Natural killer cell (primary cell): ENCODE measurements at regions of chr6 and their contacts with region 1.

Region 1: DNA sequence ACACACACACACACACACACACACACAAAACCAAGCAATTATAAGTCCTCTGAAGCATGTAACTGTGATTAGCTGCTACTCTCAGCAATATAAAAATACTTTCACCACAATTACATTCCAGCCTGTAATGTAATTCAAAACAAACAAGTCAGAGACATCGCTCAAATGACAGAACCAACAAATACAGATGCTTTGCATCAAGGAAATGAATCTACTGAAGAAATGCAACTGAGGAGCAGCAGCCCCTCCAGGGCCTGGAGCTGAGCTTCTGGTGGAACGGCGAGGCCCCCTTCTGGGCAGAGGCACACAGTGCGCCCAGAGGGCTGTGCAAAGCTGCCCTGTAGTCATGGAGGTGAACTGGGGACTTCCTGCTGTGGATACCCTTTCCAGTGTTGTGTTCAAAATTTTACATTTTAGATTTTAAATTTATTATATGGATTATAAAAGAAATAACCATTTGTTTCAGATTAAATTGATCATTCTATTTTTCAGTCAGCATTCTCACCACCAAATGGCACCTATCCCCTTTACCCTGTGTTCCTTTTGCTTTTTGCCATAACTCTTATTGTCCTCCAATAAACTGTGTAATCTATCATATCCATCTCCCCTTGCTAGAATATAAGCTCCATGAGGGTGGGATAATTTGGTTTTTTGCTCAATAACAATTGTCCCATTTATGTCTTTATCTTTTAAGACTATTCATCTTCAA is 23.2 kb downstream of the ADAT2 start:
- DNase-seq: peak; percentile 63 to 85
- ATAC-seq: peak; percentile 90 to 100 (median 100)
- H3K4me3 ChIP-seq: no peak overlapping the region
- H3K4me3 Mint-ChIP-seq: no peak overlapping the region
- H3K27ac ChIP-seq: no peak overlapping the region
- H3K27ac Mint-ChIP-seq: no peak overlapping the region
- H3K4me1 ChIP-seq: no peaks in the 10 kb centered on the region
- H3K4me1 Mint-ChIP-seq: peaks cover 0 to 3% of the 10 kb centered on the region in 2 donors
- H3K27me3 ChIP-seq: no peaks in the 10 kb centered on the region
- H3K27me3 Mint-ChIP-seq: no peaks in the 10 kb centered on the region
- CTCF ChIP-seq: peak; percentile 93

Region 2: DNA sequence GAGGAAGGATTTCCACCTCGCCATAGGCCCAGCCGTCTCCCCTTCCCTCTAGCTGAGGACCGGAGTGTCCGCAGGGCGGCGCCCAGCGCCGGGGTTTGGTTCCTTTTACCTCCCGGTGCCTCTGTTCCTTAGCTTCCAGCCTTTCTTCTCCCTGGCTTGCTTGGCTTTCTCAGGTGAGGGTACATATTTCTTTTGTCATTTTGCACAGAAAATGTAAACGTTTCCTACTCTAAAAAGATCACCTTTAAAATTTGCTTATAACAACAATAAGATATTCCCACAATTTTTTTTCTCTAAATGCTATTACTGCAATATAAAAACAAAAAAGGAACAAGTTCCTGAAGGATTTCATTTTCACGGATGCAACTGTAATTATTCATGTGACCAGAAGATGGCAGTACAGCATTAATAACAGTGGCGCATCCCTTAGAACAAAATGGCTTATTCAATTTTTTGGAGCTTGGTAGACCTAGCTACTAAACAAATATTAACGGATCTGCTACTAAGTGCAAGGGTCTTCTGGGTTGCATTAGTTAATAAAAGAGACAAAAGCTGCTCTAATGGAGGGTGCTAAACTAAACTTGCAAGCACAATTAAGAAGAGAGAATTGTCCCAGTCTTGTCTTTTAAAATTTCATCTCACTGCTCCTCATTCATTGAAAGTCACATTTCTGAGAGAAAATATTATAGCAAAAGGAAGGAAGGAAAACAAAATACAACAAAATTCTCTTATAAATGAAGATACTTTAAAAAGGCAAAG is 952.6 kb before region 1 on chr6:
- intact Hi-C with region 1: loop called (anchors 2 kb)
- DNase-seq: peak in 1 of 2 donors; percentile 73
- ATAC-seq: peak in 2 of 3 donors; percentile 52 to 70
- H3K4me3 ChIP-seq: no peak overlapping the region
- H3K4me3 Mint-ChIP-seq: no peak overlapping the region
- H3K27ac ChIP-seq: no peak overlapping the region
- H3K27ac Mint-ChIP-seq: no peak overlapping the region
- H3K4me1 ChIP-seq: no peaks in the 10 kb centered on the region
- H3K4me1 Mint-ChIP-seq: peaks cover 6% of the 10 kb centered on the region in 2 donors
- H3K27me3 ChIP-seq: peaks cover 2% of the 10 kb centered on the region
- H3K27me3 Mint-ChIP-seq: peaks cover 5 to 8% of the 10 kb centered on the region in 2 donors
- CTCF ChIP-seq: peak; percentile 89

Region 3: GRCh38 chr6:142566628-142567396 is 860.5 kb before region 1 on chr6:
- intact Hi-C with region 1: loop called (anchors 10 kb)
- DNase-seq: peak in 1 of 2 donors; percentile 76
- ATAC-seq: peak; percentile 53 to 54 (median 53)
- H3K4me3 ChIP-seq: no peak overlapping the region
- H3K4me3 Mint-ChIP-seq: no peak overlapping the region
- H3K27ac ChIP-seq: no peak overlapping the region
- H3K27ac Mint-ChIP-seq: no peak overlapping the region
- H3K4me1 ChIP-seq: no peaks in the 10 kb centered on the region
- H3K4me1 Mint-ChIP-seq: no peaks in the 10 kb centered on the region
- H3K27me3 ChIP-seq: no peaks in the 10 kb centered on the region
- H3K27me3 Mint-ChIP-seq: peaks cover 0 to 3% of the 10 kb centered on the region in 2 donors
- CTCF ChIP-seq: peak; percentile 63

Region 4: GRCh38 chr6:142692942-142693341 is 734.3 kb before region 1 on chr6:
- intact Hi-C with region 1: loop called (anchors 1 kb)
- DNase-seq: peak; percentile 55 to 84
- ATAC-seq: peak; percentile 82 to 94 (median 85)
- H3K4me3 ChIP-seq: no peak overlapping the region
- H3K4me3 Mint-ChIP-seq: no peak overlapping the region
- H3K27ac ChIP-seq: no peak overlapping the region
- H3K27ac Mint-ChIP-seq: no peak overlapping the region
- H3K4me1 ChIP-seq: no peaks in the 10 kb centered on the region
- H3K4me1 Mint-ChIP-seq: peaks cover 0 to 5% of the 10 kb centered on the region in 2 donors
- H3K27me3 ChIP-seq: no peaks in the 10 kb centered on the region
- H3K27me3 Mint-ChIP-seq: peaks cover 0 to 5% of the 10 kb centered on the region in 2 donors
- CTCF ChIP-seq: peak; percentile 95

Region 5: DNA sequence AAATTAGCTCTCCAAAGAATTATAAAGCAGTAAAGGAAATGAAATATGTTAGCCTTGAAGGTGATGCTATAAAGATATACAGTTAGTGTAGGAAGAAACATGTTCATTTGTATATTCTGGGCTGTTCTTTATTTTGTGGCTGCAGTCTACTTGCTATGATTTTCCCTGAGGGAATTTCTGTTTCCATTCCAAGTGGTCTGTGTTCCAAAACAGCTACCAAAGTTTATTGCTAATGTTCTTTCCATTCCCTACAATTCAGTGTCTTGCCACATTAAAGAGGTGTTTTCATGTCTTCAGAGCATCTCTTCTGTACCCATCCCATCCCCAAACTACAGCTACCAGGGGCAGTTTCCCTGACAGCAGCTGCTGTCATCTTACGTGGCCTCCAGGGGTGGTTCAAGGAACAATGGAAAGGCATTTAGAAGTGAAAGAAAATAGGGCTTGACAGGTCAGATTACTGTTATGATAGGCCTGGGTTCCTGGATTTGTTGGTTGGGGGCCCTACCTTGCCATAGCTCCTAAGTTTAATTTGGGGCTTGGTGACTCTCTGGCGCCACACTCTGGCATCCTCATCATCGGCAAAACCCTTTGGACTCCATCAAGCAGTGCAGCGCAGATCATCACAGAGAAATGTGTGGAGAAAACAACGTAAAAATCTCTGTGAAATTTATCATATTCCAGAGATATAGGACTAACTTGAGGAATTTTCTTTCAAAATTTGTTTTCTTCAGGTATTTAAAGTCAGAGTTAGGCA is 400.4 kb before region 1 on chr6:
- intact Hi-C with region 1: loop called (anchors 5 kb)
- DNase-seq: peak; percentile 31 to 74
- ATAC-seq: peak; percentile 61 to 73 (median 69)
- H3K4me3 ChIP-seq: no peak overlapping the region
- H3K4me3 Mint-ChIP-seq: no peak overlapping the region
- H3K27ac ChIP-seq: no peak overlapping the region
- H3K27ac Mint-ChIP-seq: no peak overlapping the region
- H3K4me1 ChIP-seq: no peaks in the 10 kb centered on the region
- H3K4me1 Mint-ChIP-seq: no peaks in the 10 kb centered on the region
- H3K27me3 ChIP-seq: no peaks in the 10 kb centered on the region
- H3K27me3 Mint-ChIP-seq: peaks cover 1 to 4% of the 10 kb centered on the region in 2 donors
- CTCF ChIP-seq: peak; percentile 70

Region 6: DNA sequence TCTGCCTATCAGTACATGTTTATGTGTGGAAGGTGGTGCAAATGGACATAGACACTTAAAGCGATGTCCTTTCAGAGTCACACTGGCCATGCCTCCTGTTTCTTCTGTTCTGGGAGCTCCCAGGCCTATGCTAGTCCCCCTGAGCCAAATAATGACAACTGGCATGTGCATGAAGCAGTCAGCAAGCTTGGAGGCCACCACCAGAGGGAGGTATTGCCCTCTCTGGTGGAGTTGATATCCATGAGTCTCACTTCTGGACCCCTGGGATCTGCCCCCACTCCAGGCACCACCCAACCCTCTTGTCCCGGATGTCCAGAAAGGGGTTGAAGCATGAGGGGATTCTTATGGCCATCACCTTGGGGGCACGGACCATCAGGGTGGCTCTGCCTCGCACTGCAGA is 194.4 kb before region 1 on chr6:
- intact Hi-C with region 1: loop called (anchors 1 kb)
- DNase-seq: peak in 1 of 2 donors; percentile 36
- ATAC-seq: peak in 1 of 3 donors; percentile 41
- H3K4me3 ChIP-seq: no peak overlapping the region
- H3K4me3 Mint-ChIP-seq: no peak overlapping the region
- H3K27ac ChIP-seq: no peak overlapping the region
- H3K27ac Mint-ChIP-seq: no peak overlapping the region
- H3K4me1 ChIP-seq: no peaks in the 10 kb centered on the region
- H3K4me1 Mint-ChIP-seq: no peaks in the 10 kb centered on the region
- H3K27me3 ChIP-seq: no peaks in the 10 kb centered on the region
- H3K27me3 Mint-ChIP-seq: no peaks in the 10 kb centered on the region
- CTCF ChIP-seq: peak; percentile 22

Region 7: GRCh38 chr6:143457563-143458359 is 30.5 kb after region 1 on chr6:
- intact Hi-C with region 1: no loop called
- DNase-seq: no peak
- ATAC-seq: no peak
- H3K4me3 ChIP-seq: no peak overlapping the region
- H3K4me3 Mint-ChIP-seq: no peak overlapping the region
- H3K27ac ChIP-seq: no peak overlapping the region
- H3K27ac Mint-ChIP-seq: no peak overlapping the region
- H3K4me1 ChIP-seq: no peaks in the 10 kb centered on the region
- H3K4me1 Mint-ChIP-seq: peaks cover 0 to 13% of the 10 kb centered on the region in 2 donors
- H3K27me3 ChIP-seq: no peaks in the 10 kb centered on the region
- H3K27me3 Mint-ChIP-seq: no peaks in the 10 kb centered on the region
- CTCF ChIP-seq: no peak

Region 8: GRCh38 chr6:143468026-143468425 is 40.8 kb after region 1 on chr6:
- intact Hi-C with region 1: no loop called
- DNase-seq: no peak
- ATAC-seq: no peak
- H3K4me3 ChIP-seq: no peak overlapping the region
- H3K4me3 Mint-ChIP-seq: no peak overlapping the region
- H3K27ac ChIP-seq: no peak overlapping the region
- H3K27ac Mint-ChIP-seq: no peak overlapping the region
- H3K4me1 ChIP-seq: no peaks in the 10 kb centered on the region
- H3K4me1 Mint-ChIP-seq: peaks cover 0 to 6% of the 10 kb centered on the region in 2 donors
- H3K27me3 ChIP-seq: no peaks in the 10 kb centered on the region
- H3K27me3 Mint-ChIP-seq: no peaks in the 10 kb centered on the region
- CTCF ChIP-seq: no peak